CD4-positive, alpha-beta memory T cell (primary cell): ENCODE measurements at regions of chr11 and their contacts with region 1.

Region 1: GRCh38 chr11:75532200-75533048 is 6.7 kb upstream of the GDPD5 start:
- DNase-seq: peak; percentile 77 to 83 (median 80)
- H3K4me3 ChIP-seq: no peak overlapping the region
- H3K4me3 Mint-ChIP-seq: peak overlapping the region in 7 of 8 donors; percentile 20 to 61 (median 35)
- H3K27ac ChIP-seq: no peak overlapping the region
- H3K27ac Mint-ChIP-seq: peak overlapping the region in 6 of 7 donors; percentile 8 to 86 (median 75)
- H3K4me1 ChIP-seq: peaks cover 30% of the 10 kb centered on the region
- H3K4me1 Mint-ChIP-seq: peaks cover 28 to 53% (median 33%) of the 10 kb centered on the region in 4 donors
- H3K27me3 ChIP-seq: no peaks in the 10 kb centered on the region
- H3K27me3 Mint-ChIP-seq: no peaks in the 10 kb centered on the region

Region 2: GRCh38 chr11:75055471-75055870 is 477.0 kb before region 1 on chr11:
- CTCF ChIA-PET with region 1: no interaction called
- POLR2A ChIA-PET with region 1: no interaction called
- intact Hi-C with region 1: no loop called
- DNase-seq: no peak
- H3K4me3 ChIP-seq: no peak overlapping the region
- H3K4me3 Mint-ChIP-seq: no peak overlapping the region
- H3K27ac ChIP-seq: no peak overlapping the region
- H3K27ac Mint-ChIP-seq: no peak overlapping the region
- H3K4me1 ChIP-seq: no peaks in the 10 kb centered on the region
- H3K4me1 Mint-ChIP-seq: no peaks in the 10 kb centered on the region
- H3K27me3 ChIP-seq: no peaks in the 10 kb centered on the region
- H3K27me3 Mint-ChIP-seq: peaks cover 16 to 19% of the 10 kb centered on the region in 2 donors

Region 3: DNA sequence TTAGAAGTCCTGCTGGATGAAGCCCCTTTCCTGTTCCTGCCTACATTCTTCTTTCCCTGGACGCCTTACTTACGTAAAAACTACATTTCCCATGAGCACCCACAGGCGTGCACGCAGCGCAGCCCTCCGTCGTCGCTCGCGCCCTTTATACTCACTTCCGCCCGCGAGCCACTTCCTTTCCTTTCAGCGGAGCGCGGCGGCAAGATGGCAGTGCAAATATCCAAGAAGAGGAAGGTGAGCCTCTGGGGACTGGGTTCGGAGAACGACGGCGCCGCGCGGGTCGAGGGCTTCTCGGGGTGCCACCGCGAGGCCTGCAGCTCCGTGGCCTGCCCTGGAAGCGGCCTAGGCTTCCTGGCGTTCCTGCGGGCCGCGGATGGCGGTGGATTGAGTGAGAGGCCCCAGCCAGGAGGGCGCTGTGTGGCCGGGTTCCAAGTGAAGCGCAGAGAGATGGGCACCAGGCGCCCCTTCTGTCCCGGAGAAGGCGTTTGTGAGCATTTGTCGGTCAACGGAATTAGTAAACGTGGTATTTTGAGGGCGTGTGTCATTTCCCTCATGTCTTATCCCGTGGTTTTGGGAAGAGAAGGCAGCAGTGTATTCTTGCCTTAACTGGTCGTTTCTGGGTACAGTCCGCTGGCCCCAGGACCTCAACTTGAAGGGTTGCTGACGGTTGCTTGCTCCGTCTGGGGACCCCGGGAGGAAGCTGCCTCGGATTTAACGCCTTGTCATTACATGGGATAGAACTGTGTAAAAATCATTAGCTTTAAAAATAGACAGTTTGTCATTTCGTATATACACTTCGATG is 132.9 kb before region 1 on chr11 and contains the start of gene RPS3:
- CTCF ChIA-PET with region 1: interaction called, 183 read pairs
- POLR2A ChIA-PET with region 1: interaction called, 4 read pairs
- intact Hi-C with region 1: no loop called
- DNase-seq: peak; percentile 87 to 89 (median 88)
- H3K4me3 ChIP-seq: peak within 1 kb of the TSS; percentile 71 to 93
- H3K4me3 Mint-ChIP-seq: peak within 1 kb of the TSS; percentile 88 to 98 (median 96)
- H3K27ac ChIP-seq: peak within 1 kb of the TSS; percentile 83
- H3K27ac Mint-ChIP-seq: peak within 1 kb of the TSS; percentile 96 to 99 (median 98)
- H3K4me1 ChIP-seq: peaks cover 38% of the 10 kb centered on the region
- H3K4me1 Mint-ChIP-seq: peaks cover 31 to 55% (median 40%) of the 10 kb centered on the region in 4 donors
- H3K27me3 ChIP-seq: no peaks in the 10 kb centered on the region
- H3K27me3 Mint-ChIP-seq: peaks cover 0 to 1% of the 10 kb centered on the region in 2 donors
- total RNA-seq, gene RPS3: 4,846 to 5,053 TPM

Region 4: DNA sequence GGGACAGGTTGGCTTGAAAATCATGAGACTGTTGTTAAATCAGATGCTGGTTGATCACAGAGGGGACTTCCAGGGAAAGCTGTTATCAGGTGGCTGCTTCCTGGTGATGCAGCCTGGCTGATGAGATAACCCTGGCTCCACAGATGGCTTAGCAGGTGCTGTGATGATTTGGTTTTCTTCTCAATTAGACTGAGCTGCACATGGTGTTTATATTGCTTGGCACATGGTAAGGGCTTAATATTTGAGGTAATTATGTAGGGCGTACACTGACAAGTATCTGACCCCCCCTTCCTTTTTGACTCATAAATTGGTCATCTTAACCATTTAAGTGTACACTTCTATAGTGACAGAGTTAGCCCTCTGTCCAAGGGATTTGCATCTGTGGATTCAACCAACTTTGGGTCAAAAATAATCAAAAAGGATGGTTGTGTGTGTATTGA is 126.1 kb before region 1 on chr11:
- CTCF ChIA-PET with region 1: interaction called, 46 read pairs
- POLR2A ChIA-PET with region 1: interaction called, 4 read pairs
- intact Hi-C with region 1: loop called (anchors 1 kb)
- DNase-seq: no peak
- H3K4me3 ChIP-seq: no peak overlapping the region
- H3K4me3 Mint-ChIP-seq: no peak overlapping the region
- H3K27ac ChIP-seq: no peak overlapping the region
- H3K27ac Mint-ChIP-seq: peak overlapping the region in 2 of 7 donors; percentile 42 to 68
- H3K4me1 ChIP-seq: peaks cover 36% of the 10 kb centered on the region
- H3K4me1 Mint-ChIP-seq: peaks cover 30 to 53% (median 36%) of the 10 kb centered on the region in 4 donors
- H3K27me3 ChIP-seq: no peaks in the 10 kb centered on the region
- H3K27me3 Mint-ChIP-seq: no peaks in the 10 kb centered on the region

Region 5: GRCh38 chr11:75445315-75445953 is 87.0 kb before region 1 on chr11:
- CTCF ChIA-PET with region 1: interaction called, 301 read pairs
- POLR2A ChIA-PET with region 1: interaction called, 12 read pairs
- intact Hi-C with region 1: loop called (anchors 1 kb)
- DNase-seq: peak; percentile 54 to 72 (median 63)
- H3K4me3 ChIP-seq: no peak overlapping the region
- H3K4me3 Mint-ChIP-seq: no peak overlapping the region
- H3K27ac ChIP-seq: no peak overlapping the region
- H3K27ac Mint-ChIP-seq: peak overlapping the region in 3 of 7 donors; percentile 29 to 45 (median 29)
- H3K4me1 ChIP-seq: peaks cover 5% of the 10 kb centered on the region
- H3K4me1 Mint-ChIP-seq: peaks cover 0 to 7% (median 3%) of the 10 kb centered on the region in 4 donors
- H3K27me3 ChIP-seq: no peaks in the 10 kb centered on the region
- H3K27me3 Mint-ChIP-seq: no peaks in the 10 kb centered on the region

Region 6: DNA sequence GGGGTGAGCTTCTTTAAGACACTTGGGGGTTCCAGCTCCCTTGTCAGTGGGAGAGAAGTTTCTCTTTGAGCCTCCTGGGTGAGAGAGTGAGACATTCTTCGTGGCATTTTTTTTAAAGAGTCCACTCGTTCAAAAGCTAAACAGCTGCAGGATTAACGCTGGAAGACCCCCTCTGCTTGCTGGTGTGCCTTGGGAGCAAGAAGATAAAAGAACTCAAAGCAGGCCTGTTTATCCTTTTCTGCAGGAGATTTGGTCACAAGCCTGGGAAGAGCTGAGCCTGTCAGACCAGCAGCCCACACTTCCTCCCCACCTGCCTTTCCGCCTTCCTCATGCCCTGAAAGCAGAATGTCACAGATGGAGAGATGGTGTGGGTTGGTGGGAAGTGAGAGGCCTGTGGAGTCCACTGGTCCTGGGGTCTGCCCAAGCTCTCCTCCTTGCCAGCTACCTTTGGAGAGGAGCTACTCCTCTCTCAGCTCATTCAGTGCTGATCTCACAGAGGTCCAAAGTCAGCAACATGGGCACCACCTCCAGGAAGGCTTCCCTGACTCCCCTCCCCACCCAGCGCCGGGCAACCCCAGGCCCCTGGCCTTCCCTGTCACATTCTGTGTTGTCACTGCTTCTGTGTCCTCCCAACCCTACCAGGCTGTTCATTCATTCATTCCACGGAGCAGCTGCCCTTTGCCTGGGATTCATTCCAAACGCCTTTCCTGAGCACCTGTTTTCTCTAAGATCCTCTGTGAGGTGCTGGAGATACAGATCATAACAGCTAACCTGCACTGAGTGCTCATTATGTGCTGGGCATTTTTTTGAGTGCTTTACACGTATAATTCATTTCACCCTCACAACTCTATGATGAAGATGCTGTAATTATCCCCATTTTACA is 13.4 kb before region 1 on chr11:
- CTCF ChIA-PET with region 1: interaction called, 24 read pairs
- POLR2A ChIA-PET with region 1: interaction called, 3 read pairs
- intact Hi-C with region 1: no loop called
- DNase-seq: no peak
- H3K4me3 ChIP-seq: no peak overlapping the region
- H3K4me3 Mint-ChIP-seq: peak overlapping the region in 2 of 8 donors; percentile 27 to 46
- H3K27ac ChIP-seq: no peak overlapping the region
- H3K27ac Mint-ChIP-seq: peak overlapping the region; percentile 48 to 92 (median 74)
- H3K4me1 ChIP-seq: peaks cover 89% of the 10 kb centered on the region
- H3K4me1 Mint-ChIP-seq: peaks cover 56 to 96% (median 73%) of the 10 kb centered on the region in 4 donors
- H3K27me3 ChIP-seq: no peaks in the 10 kb centered on the region
- H3K27me3 Mint-ChIP-seq: no peaks in the 10 kb centered on the region

Region 7: DNA sequence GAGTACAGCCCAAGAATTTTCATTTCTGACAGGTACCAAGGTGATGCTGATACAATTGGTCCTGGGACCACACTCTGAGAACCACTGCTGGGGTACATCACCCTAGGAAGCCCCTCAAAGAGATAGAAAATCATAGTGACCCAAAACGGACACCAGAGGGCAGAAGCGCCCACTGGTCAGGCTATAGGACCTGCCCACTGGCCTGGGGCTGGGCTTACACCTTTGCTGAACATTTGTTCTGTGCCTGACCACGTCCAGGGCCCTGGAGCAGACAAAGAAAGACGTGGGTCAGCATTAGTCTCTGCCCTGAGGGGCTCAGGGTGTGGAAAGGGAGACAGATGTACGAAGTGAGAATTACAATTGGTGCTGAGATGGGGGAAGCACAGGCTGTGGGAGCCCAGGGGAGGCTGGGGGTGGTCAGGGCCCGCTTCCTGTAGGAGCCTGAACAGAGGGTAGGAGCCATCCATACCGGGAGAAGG is 15.2 kb after region 1 on chr11:
- CTCF ChIA-PET with region 1: interaction called, 11 read pairs
- POLR2A ChIA-PET with region 1: no interaction called
- intact Hi-C with region 1: no loop called
- DNase-seq: no peak
- H3K4me3 ChIP-seq: no peak overlapping the region
- H3K4me3 Mint-ChIP-seq: no peak overlapping the region
- H3K27ac ChIP-seq: no peak overlapping the region
- H3K27ac Mint-ChIP-seq: no peak overlapping the region
- H3K4me1 ChIP-seq: no peaks in the 10 kb centered on the region
- H3K4me1 Mint-ChIP-seq: peaks cover 0 to 3% (median 0%) of the 10 kb centered on the region in 4 donors
- H3K27me3 ChIP-seq: no peaks in the 10 kb centered on the region
- H3K27me3 Mint-ChIP-seq: peaks cover 0 to 3% of the 10 kb centered on the region in 2 donors

Region 8: GRCh38 chr11:75773595-75774353 is 241.3 kb after region 1 on chr11:
- CTCF ChIA-PET with region 1: no interaction called
- POLR2A ChIA-PET with region 1: no interaction called
- intact Hi-C with region 1: no loop called
- DNase-seq: no peak
- H3K4me3 ChIP-seq: no peak overlapping the region
- H3K4me3 Mint-ChIP-seq: no peak overlapping the region
- H3K27ac ChIP-seq: no peak overlapping the region
- H3K27ac Mint-ChIP-seq: peak overlapping the region in 1 of 7 donors; percentile 65
- H3K4me1 ChIP-seq: peaks cover 23% of the 10 kb centered on the region
- H3K4me1 Mint-ChIP-seq: peaks cover 5 to 28% (median 10%) of the 10 kb centered on the region in 4 donors
- H3K27me3 ChIP-seq: peaks cover 3% of the 10 kb centered on the region
- H3K27me3 Mint-ChIP-seq: peaks cover 0 to 6% of the 10 kb centered on the region in 2 donors